HEK293 (cell line): ENCODE measurements at regions of chr7 and their contacts with region 1.

Region 1: GRCh38 chr7:135525426-135525825 is 15.5 kb upstream of the CNOT4 start:
- H3K4me3 ChIP-seq: no peak overlapping the region
- H3K27ac ChIP-seq: no peak overlapping the region
- H3K4me1 ChIP-seq: no peaks in the 10 kb centered on the region
- CTCF ChIP-seq: no peak

Region 2: GRCh38 chr7:135509903-135510602 is 15.4 kb before region 1 on chr7 and contains the start of gene CNOT4:
- CTCF ChIA-PET with region 1: no interaction called
- POLR2A ChIA-PET with region 1: interaction called, 11 read pairs
- H3K4me3 ChIP-seq: peak within 1 kb of the TSS; percentile 99
- H3K27ac ChIP-seq: peak within 1 kb of the TSS; percentile 79
- H3K4me1 ChIP-seq: peaks cover 3% of the 10 kb centered on the region
- CTCF ChIP-seq: no peak